Heart right ventricle (tissue), 16 donors: ENCODE measurements at regions of chr10 and their contacts with region 1.

Region 1: DNA sequence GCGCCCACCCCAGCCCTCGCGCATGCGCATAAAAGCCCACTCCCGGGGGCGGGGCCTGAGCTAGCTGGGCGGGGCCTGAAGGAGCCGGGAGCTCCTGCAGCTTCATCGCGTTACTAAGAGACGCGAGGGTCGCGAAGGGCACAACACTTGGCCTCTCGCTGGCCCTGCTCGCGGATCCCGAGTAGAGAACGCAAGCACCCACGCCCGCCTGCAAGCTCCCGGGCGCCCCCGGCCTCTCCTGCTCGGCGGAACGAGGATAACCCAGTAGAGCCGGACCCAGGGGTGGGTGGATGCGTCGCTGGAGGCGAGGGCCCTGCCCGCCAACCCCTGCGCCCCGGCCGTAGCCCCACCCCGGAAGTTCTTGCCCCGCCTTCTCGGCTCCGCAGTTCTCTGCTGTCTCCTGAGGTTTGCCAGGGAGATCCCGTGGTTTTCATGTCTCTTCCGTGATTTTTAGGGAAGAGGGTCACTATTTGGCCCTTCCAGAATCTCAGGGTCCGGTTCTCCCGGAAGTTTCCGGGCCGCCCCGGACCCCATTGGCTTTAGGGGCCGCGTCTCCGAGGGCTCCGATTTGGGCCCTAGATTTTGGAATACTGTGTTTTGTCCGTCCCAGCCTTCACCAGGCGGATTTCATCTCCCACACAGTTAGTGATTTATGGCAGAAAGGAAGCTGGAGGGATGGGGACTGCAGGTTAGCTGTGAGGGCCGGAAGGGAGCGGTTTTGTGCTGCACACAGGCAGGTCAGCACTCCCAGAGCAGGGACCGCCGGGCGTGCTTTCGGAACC is at the start of gene MEIG1:
- DNase-seq: peak; percentile 93 to 94
- ATAC-seq: peak; percentile 97 to 99 (median 98)
- H3K4me3 ChIP-seq: peak within 1 kb of the TSS; percentile 57 to 96 (median 76)
- H3K27ac ChIP-seq: peak within 1 kb of the TSS; percentile 81 to 98 (median 94)
- H3K4me1 ChIP-seq: peaks cover 0 to 16% (median 6%) of the 10 kb centered on the region in 9 donors
- H3K27me3 ChIP-seq: no peaks in the 10 kb centered on the region
- CTCF ChIP-seq: no peak
- total RNA-seq, gene MEIG1: 0.53 TPM in 1 of 10 donors, not detected in the others

Region 2: GRCh38 chr10:13348216-13349017 is 1611.0 kb before region 1 on chr10 and contains the start of gene SEPHS1:
- intact Hi-C with region 1: loop called in 1 of 10 experiments (anchors 10 kb)
- DNase-seq: peak; percentile 68 to 74
- ATAC-seq: peak; percentile 61 to 88 (median 78)
- H3K4me3 ChIP-seq: peak within 1 kb of the TSS; percentile 64 to 95 (median 86)
- H3K27ac ChIP-seq: peak within 1 kb of the TSS; percentile 92 to 99 (median 98)
- H3K4me1 ChIP-seq: peaks cover 0 to 37% (median 34%) of the 10 kb centered on the region in 9 donors
- H3K27me3 ChIP-seq: peaks cover 0 to 27% (median 23%) of the 10 kb centered on the region in 7 donors
- CTCF ChIP-seq: peak in 3 of 9 donors; percentile 14 to 26 (median 16)
- total RNA-seq, gene SEPHS1: 26.7 to 38.9 (median 30.4) TPM

Region 3: GRCh38 chr10:14889318-14889717 is 70.1 kb before region 1 on chr10:
- intact Hi-C with region 1: loop called in 1 of 10 experiments (anchors 10 kb)
- DNase-seq: no peak
- ATAC-seq: no peak
- H3K4me3 ChIP-seq: no peak overlapping the region
- H3K27ac ChIP-seq: no peak overlapping the region
- H3K4me1 ChIP-seq: no peaks in the 10 kb centered on the region
- H3K27me3 ChIP-seq: no peaks in the 10 kb centered on the region
- CTCF ChIP-seq: peak in 3 of 9 donors; percentile 5 to 22 (median 8)

Region 4: DNA sequence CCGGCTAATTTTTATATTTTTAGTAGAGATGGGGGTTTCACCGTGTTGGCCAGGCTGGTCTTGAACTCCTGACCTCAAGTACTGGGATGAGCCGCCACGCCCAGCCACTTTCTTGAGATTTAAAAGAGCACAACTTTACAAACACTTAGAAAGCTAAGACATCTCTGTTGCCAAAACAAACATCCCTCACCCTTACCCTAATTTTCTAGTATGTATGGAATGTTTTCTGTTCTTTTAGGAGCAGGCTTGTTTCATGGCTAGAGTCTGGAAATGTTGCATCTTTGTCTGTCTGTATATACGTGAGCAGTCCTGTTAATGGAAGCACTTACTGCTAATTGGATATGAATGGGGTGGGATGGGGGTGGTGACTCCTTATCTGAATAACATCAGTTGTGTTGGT is 87.2 kb after region 1 on chr10:
- intact Hi-C with region 1: no loop called
- DNase-seq: no peak
- ATAC-seq: no peak
- H3K4me3 ChIP-seq: no peak overlapping the region
- H3K27ac ChIP-seq: no peak overlapping the region
- H3K4me1 ChIP-seq: no peaks in the 10 kb centered on the region
- H3K27me3 ChIP-seq: peaks cover 0 to 5% (median 0%) of the 10 kb centered on the region in 7 donors
- CTCF ChIP-seq: no peak

Region 5: GRCh38 chr10:15097011-15097812 is 137.7 kb after region 1 on chr10 and contains the start of gene RPP38:
- intact Hi-C with region 1: loop called in 8 of 10 experiments (anchors 2 to 10 kb)
- DNase-seq: peak; percentile 97 to 98
- ATAC-seq: peak; percentile 97 to 99 (median 98)
- H3K4me3 ChIP-seq: peak within 1 kb of the TSS; percentile 66 to 99 (median 87)
- H3K27ac ChIP-seq: peak within 1 kb of the TSS; percentile 90 to 99 (median 95)
- H3K4me1 ChIP-seq: peaks cover 5 to 33% (median 26%) of the 10 kb centered on the region in 9 donors
- H3K27me3 ChIP-seq: no peaks in the 10 kb centered on the region
- CTCF ChIP-seq: no peak
- total RNA-seq, gene RPP38: 3.9 to 11.0 (median 6.7) TPM

Region 6: GRCh38 chr10:15370856-15371701 is 411.6 kb after region 1 on chr10 and contains the start of gene FAM171A1:
- intact Hi-C with region 1: loop called in 1 of 10 experiments (anchors 10 kb)
- DNase-seq: peak; percentile 42 to 68
- ATAC-seq: peak; percentile 35 to 86 (median 71)
- H3K4me3 ChIP-seq: peak within 1 kb of the TSS; percentile 60 to 82 (median 72)
- H3K27ac ChIP-seq: peak within 1 kb of the TSS in 8 of 10 donors; percentile 59 to 81 (median 76)
- H3K4me1 ChIP-seq: peaks cover 0 to 42% (median 15%) of the 10 kb centered on the region in 9 donors
- H3K27me3 ChIP-seq: peaks cover 0 to 69% (median 0%) of the 10 kb centered on the region in 7 donors
- CTCF ChIP-seq: peak in 6 of 9 donors; percentile 3 to 48 (median 14)
- total RNA-seq, gene FAM171A1: 3.5 to 10.5 (median 6.8) TPM